B cell (primary cell): ENCODE measurements at regions of chr15 and their contacts with region 1.

Region 1: GRCh38 chr15:74635228-74635627 is 19.6 kb downstream of the CLK3 start:
- DNase-seq: peak; percentile 83
- ATAC-seq: peak; percentile 71
- H3K4me3 ChIP-seq: no peak overlapping the region
- H3K4me3 Mint-ChIP-seq: no peak overlapping the region
- H3K27ac ChIP-seq: no peak overlapping the region
- H3K27ac Mint-ChIP-seq: peak overlapping the region; percentile 33
- H3K4me1 ChIP-seq: peaks cover 8 to 20% of the 10 kb centered on the region in 2 donors
- H3K4me1 Mint-ChIP-seq: peaks cover 18% of the 10 kb centered on the region
- H3K27me3 ChIP-seq: no peaks in the 10 kb centered on the region
- H3K27me3 Mint-ChIP-seq: no peaks in the 10 kb centered on the region
- CTCF ChIP-seq: peak; percentile 88

Region 2: GRCh38 chr15:74373731-74374647 is 261.2 kb before region 1 on chr15:
- CTCF ChIA-PET with region 1: interaction called, 113 read pairs
- POLR2A ChIA-PET with region 1: interaction called, 14 read pairs
- intact Hi-C with region 1: no loop called
- DNase-seq: peak; percentile 97
- ATAC-seq: peak; percentile 95
- H3K4me3 ChIP-seq: peak overlapping the region; percentile 8 to 80 (median 77)
- H3K4me3 Mint-ChIP-seq: peak overlapping the region; percentile 60
- H3K27ac ChIP-seq: peak overlapping the region; percentile 38 to 60
- H3K27ac Mint-ChIP-seq: peak overlapping the region; percentile 72
- H3K4me1 ChIP-seq: peaks cover 11 to 20% of the 10 kb centered on the region in 2 donors
- H3K4me1 Mint-ChIP-seq: peaks cover 16% of the 10 kb centered on the region
- H3K27me3 ChIP-seq: no peaks in the 10 kb centered on the region
- H3K27me3 Mint-ChIP-seq: peaks cover 13% of the 10 kb centered on the region
- CTCF ChIP-seq: peak; percentile 95

Region 3: GRCh38 chr15:74620636-74621545 is 14.3 kb before region 1 on chr15:
- CTCF ChIA-PET with region 1: interaction called, 371 read pairs
- POLR2A ChIA-PET with region 1: no interaction called
- intact Hi-C with region 1: loop called (anchors 1 kb)
- DNase-seq: peak; percentile 84
- ATAC-seq: peak; percentile 95
- H3K4me3 ChIP-seq: no peak overlapping the region
- H3K4me3 Mint-ChIP-seq: peak overlapping the region; percentile 50
- H3K27ac ChIP-seq: no peak overlapping the region
- H3K27ac Mint-ChIP-seq: peak overlapping the region; percentile 81
- H3K4me1 ChIP-seq: peaks cover 15 to 46% of the 10 kb centered on the region in 2 donors
- H3K4me1 Mint-ChIP-seq: peaks cover 39% of the 10 kb centered on the region
- H3K27me3 ChIP-seq: no peaks in the 10 kb centered on the region
- H3K27me3 Mint-ChIP-seq: no peaks in the 10 kb centered on the region
- CTCF ChIP-seq: peak; percentile 94

Region 4: DNA sequence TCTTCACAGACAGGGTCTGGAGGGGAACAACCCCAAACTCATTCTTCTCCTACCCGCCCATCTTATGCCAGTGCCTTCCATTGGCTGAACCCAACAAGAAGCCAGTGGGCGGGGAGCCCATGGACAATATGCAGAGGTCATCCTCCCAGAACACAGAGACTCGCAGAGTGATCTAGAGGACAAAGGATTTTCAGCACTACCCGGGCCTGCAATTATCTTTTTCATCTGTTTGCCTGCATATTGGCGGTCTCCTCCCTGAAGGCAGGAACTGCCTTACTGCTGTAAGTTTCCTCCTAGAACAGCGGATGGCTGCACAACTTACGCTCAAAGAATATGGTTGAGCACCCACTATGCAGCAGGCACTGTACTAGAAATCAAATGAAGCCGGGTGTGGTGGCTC is 104.7 kb after region 1 on chr15:
- CTCF ChIA-PET with region 1: no interaction called
- POLR2A ChIA-PET with region 1: no interaction called
- intact Hi-C with region 1: no loop called
- DNase-seq: no peak
- ATAC-seq: no peak
- H3K4me3 ChIP-seq: no peak overlapping the region
- H3K4me3 Mint-ChIP-seq: no peak overlapping the region
- H3K27ac ChIP-seq: no peak overlapping the region
- H3K27ac Mint-ChIP-seq: no peak overlapping the region
- H3K4me1 ChIP-seq: no peaks in the 10 kb centered on the region
- H3K4me1 Mint-ChIP-seq: peaks cover 7% of the 10 kb centered on the region
- H3K27me3 ChIP-seq: peaks cover 0 to 13% (median 4%) of the 10 kb centered on the region in 4 experiments
- H3K27me3 Mint-ChIP-seq: peaks cover 35% of the 10 kb centered on the region
- CTCF ChIP-seq: no peak

Region 5: GRCh38 chr15:74787251-74788041 is 152.2 kb after region 1 on chr15:
- CTCF ChIA-PET with region 1: interaction called, 117 read pairs
- POLR2A ChIA-PET with region 1: no interaction called
- intact Hi-C with region 1: no loop called
- DNase-seq: peak; percentile 98
- ATAC-seq: peak; percentile 57
- H3K4me3 ChIP-seq: peak overlapping the region; percentile 67 to 99 (median 86)
- H3K4me3 Mint-ChIP-seq: peak overlapping the region; percentile 93
- H3K27ac ChIP-seq: peak overlapping the region; percentile 90 to 93
- H3K27ac Mint-ChIP-seq: peak overlapping the region; percentile 99
- H3K4me1 ChIP-seq: peaks cover 61 to 91% of the 10 kb centered on the region in 2 donors
- H3K4me1 Mint-ChIP-seq: peaks cover 94% of the 10 kb centered on the region
- H3K27me3 ChIP-seq: no peaks in the 10 kb centered on the region
- H3K27me3 Mint-ChIP-seq: no peaks in the 10 kb centered on the region
- CTCF ChIP-seq: peak; percentile 75

Region 6: GRCh38 chr15:74842581-74843444 is 207.6 kb after region 1 on chr15 and contains the start of gene ULK3:
- CTCF ChIA-PET with region 1: interaction called, 11 read pairs
- POLR2A ChIA-PET with region 1: no interaction called
- intact Hi-C with region 1: no loop called
- DNase-seq: peak; percentile 95
- ATAC-seq: peak; percentile 95
- H3K4me3 ChIP-seq: peak within 1 kb of the TSS; percentile 65 to 88 (median 72)
- H3K4me3 Mint-ChIP-seq: peak within 1 kb of the TSS; percentile 91
- H3K27ac ChIP-seq: peak within 1 kb of the TSS; percentile 78 to 81
- H3K27ac Mint-ChIP-seq: peak within 1 kb of the TSS; percentile 92
- H3K4me1 ChIP-seq: peaks cover 26 to 40% of the 10 kb centered on the region in 2 donors
- H3K4me1 Mint-ChIP-seq: peaks cover 43% of the 10 kb centered on the region
- H3K27me3 ChIP-seq: no peaks in the 10 kb centered on the region
- H3K27me3 Mint-ChIP-seq: no peaks in the 10 kb centered on the region
- CTCF ChIP-seq: peak; percentile 80
- total RNA-seq, gene ULK3: 51.1 and 55.9 TPM in 2 replicates

Region 7: DNA sequence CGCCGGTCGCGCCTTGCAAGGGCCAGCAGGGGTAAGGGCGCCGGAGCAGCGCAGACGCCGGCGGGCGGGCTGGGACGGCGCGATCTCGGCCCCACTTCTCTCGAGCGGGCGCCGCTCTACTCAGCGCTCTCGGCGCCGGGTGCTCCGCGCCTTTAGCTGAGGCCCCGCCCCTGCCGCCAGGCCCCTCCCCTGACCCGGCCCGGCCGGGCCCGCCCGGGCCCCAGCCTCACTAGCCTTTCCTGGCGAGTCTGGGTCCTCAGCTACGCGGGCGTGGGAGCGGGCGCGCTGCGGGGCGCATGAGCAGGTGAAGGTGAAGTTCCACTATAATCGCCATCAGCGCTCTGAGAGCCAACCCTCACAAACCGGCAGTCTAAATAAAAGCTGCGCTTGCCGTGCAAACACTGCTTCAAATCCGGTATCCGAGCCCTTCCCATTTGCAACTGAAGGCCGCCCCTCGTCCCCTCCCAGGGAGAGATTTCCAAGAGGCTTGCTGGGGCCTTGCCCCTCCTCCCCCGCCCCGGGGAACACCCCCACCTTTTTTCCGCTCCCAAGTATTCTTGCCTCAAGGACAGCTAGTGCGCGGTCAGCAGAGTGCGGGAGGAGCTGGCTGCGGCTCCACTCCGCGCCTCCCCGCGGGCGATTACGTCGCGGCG is 321.5 kb after region 1 on chr15 and contains the start of gene RPP25:
- CTCF ChIA-PET with region 1: interaction called, 55 read pairs
- POLR2A ChIA-PET with region 1: no interaction called
- intact Hi-C with region 1: no loop called
- DNase-seq: peak; percentile 84
- ATAC-seq: peak; percentile 91
- H3K4me3 ChIP-seq: peak within 1 kb of the TSS; percentile 39 to 80 (median 53)
- H3K4me3 Mint-ChIP-seq: peak within 1 kb of the TSS; percentile 85
- H3K27ac ChIP-seq: no peak within 1 kb of the TSS
- H3K27ac Mint-ChIP-seq: no peak within 1 kb of the TSS
- H3K4me1 ChIP-seq: peaks cover 38 to 40% of the 10 kb centered on the region in 2 donors
- H3K4me1 Mint-ChIP-seq: peaks cover 30% of the 10 kb centered on the region
- H3K27me3 ChIP-seq: peaks cover 0 to 64% (median 37%) of the 10 kb centered on the region in 4 experiments
- H3K27me3 Mint-ChIP-seq: peaks cover 43% of the 10 kb centered on the region
- CTCF ChIP-seq: no peak
- total RNA-seq, gene RPP25: 3.1 and 4.4 TPM in 2 replicates